Activated T-helper 1 cell treated with anti-CD3 and anti-CD28 coated beads, Interleukin-12 subunit alpha, Interleukin-12 subunit beta, Interleukin-2, Interleukin-4 antibody, amounts not matched to agents 30 ng/mL and 10 ng/mL and 1 ng/mL, durations not matched to agents 14 hours and 24 hours and 36 hours (primary cell): ENCODE measurements at regions of chr12 and their contacts with region 1.

Region 1: DNA sequence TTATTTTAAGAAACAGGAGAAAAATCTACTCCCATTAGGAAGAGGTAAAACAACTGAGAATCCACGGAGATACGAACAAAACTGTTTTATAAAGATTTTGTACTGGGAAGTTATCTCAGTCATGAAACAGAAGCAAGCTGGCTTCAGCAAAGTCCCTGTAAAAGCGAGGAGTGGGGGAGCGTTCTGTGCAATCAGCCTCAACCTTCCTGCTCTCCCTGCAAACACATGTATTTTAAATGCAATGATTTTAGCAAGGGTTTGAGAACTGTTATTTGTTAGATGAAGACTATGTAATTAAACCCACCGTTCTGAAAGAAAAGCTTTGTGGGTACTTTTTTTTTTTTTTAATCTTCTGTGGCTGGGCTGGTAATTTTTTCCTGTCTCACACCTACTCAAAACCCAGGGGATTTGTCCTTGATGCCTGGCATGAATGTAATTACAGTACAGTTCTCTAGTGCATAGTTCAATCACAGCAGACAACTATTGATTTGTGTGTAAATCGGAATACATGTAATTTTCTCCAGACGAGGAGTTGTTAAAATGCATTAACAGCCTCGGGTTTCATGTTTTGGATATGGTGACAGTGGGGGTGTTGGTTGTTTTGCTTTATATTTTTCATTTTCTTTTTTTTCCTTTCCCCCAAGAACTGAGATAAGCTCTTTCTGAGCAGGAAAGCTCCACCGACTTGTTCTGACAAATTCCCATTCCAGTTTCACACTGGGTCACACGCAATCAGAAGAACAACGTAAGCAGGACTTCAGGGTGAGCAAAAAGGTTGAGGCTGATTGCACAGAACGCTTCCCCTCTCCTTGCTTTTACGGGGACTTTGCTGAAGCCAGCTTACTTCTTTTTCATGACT is 153.6 kb downstream of the PHLDA1 start:
- DNase-seq: no peak
- H3K4me3 Mint-ChIP-seq: no peak overlapping the region
- H3K27ac Mint-ChIP-seq: no peak overlapping the region
- H3K4me1 Mint-ChIP-seq: peaks cover 25% of the 10 kb centered on the region
- H3K27me3 Mint-ChIP-seq: peaks cover 32% of the 10 kb centered on the region

Region 2: GRCh38 chr12:75816897-75817296 is 61.1 kb before region 1 on chr12:
- intact Hi-C with region 1: loop called (anchors 10 kb)
- DNase-seq: no peak
- H3K4me3 Mint-ChIP-seq: no peak overlapping the region
- H3K27ac Mint-ChIP-seq: no peak overlapping the region
- H3K4me1 Mint-ChIP-seq: peaks cover 29% of the 10 kb centered on the region
- H3K27me3 Mint-ChIP-seq: peaks cover 4% of the 10 kb centered on the region

Region 3: GRCh38 chr12:75905922-75906321 is 27.9 kb after region 1 on chr12:
- intact Hi-C with region 1: no loop called
- DNase-seq: no peak
- H3K4me3 Mint-ChIP-seq: no peak overlapping the region
- H3K27ac Mint-ChIP-seq: no peak overlapping the region
- H3K4me1 Mint-ChIP-seq: peaks cover 5% of the 10 kb centered on the region
- H3K27me3 Mint-ChIP-seq: peaks cover 10% of the 10 kb centered on the region

Region 4: GRCh38 chr12:75954041-75954440 is 76.0 kb after region 1 on chr12:
- intact Hi-C with region 1: no loop called
- DNase-seq: no peak
- H3K4me3 Mint-ChIP-seq: no peak overlapping the region
- H3K27ac Mint-ChIP-seq: no peak overlapping the region
- H3K4me1 Mint-ChIP-seq: peaks cover 28% of the 10 kb centered on the region
- H3K27me3 Mint-ChIP-seq: peaks cover 4% of the 10 kb centered on the region